Activated CD4-positive, alpha-beta memory T cell treated with anti-CD3 and anti-CD28 coated beads for 36 hours (primary cell): ENCODE measurements at regions of chr22 and their contacts with region 1.

Region 1: GRCh38 chr22:31829505-31829904 is 75.7 kb downstream of the DEPDC5 start:
- DNase-seq: peak; percentile 78
- H3K4me3 Mint-ChIP-seq: no peak overlapping the region
- H3K27ac Mint-ChIP-seq: peak overlapping the region; percentile 57
- H3K4me1 Mint-ChIP-seq: peaks cover 31% of the 10 kb centered on the region
- H3K27me3 Mint-ChIP-seq: no peaks in the 10 kb centered on the region

Region 2: GRCh38 chr22:31818481-31819392 is 10.8 kb before region 1 on chr22:
- CTCF ChIA-PET with region 1: no interaction called
- POLR2A ChIA-PET with region 1: interaction called, 3 read pairs
- intact Hi-C with region 1: loop called (anchors 1 kb)
- DNase-seq: peak; percentile 60
- H3K4me3 Mint-ChIP-seq: no peak overlapping the region
- H3K27ac Mint-ChIP-seq: no peak overlapping the region
- H3K4me1 Mint-ChIP-seq: peaks cover 13% of the 10 kb centered on the region
- H3K27me3 Mint-ChIP-seq: no peaks in the 10 kb centered on the region

Region 3: DNA sequence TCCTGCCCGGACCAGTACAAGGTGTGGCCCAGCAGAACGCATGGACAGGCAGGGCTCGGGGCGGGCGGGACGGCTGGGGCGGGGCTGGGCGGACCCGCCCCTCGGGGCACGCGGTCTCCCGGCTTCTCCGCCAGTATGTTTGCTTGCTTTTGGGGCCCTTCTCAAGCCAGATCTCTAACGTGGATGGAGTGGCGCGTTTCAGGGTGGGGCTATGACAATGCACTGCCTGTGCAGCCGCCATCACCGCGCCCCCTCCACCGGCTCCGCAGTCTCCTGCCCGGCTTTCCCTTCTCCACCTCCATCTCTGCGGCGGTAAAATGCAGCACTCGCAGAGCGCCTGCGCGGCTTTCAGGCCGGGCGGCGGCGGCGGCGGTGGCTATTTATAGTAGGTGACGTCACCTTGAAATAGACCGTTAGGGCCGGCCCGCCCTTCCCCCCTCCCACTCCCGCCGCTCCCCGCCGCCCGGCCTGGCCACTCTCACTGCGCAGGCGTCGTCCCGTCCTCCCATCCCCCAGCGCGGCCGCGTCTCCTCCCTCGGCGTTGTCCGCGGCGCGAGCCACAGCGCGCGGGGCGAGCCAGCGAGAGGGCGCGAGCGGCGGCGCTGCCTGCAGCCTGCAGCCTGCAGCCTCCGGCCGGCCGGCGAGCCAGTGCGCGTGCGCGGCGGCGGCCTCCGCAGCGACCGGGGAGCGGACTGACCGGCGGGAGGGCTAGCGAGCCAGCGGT is 114.6 kb after region 1 on chr22 and contains the start of gene YWHAH:
- CTCF ChIA-PET with region 1: no interaction called
- POLR2A ChIA-PET with region 1: no interaction called
- intact Hi-C with region 1: loop called (anchors 2 kb)
- DNase-seq: peak; percentile 95
- H3K4me3 Mint-ChIP-seq: no peak within 1 kb of the TSS
- H3K27ac Mint-ChIP-seq: peak within 1 kb of the TSS; percentile 88
- H3K4me1 Mint-ChIP-seq: peaks cover 22% of the 10 kb centered on the region
- H3K27me3 Mint-ChIP-seq: no peaks in the 10 kb centered on the region
- total RNA-seq, gene YWHAH: 137 to 142 TPM